ENCODE measurements at regions of chr12 and their contacts with region 1.

Region 1: DNA sequence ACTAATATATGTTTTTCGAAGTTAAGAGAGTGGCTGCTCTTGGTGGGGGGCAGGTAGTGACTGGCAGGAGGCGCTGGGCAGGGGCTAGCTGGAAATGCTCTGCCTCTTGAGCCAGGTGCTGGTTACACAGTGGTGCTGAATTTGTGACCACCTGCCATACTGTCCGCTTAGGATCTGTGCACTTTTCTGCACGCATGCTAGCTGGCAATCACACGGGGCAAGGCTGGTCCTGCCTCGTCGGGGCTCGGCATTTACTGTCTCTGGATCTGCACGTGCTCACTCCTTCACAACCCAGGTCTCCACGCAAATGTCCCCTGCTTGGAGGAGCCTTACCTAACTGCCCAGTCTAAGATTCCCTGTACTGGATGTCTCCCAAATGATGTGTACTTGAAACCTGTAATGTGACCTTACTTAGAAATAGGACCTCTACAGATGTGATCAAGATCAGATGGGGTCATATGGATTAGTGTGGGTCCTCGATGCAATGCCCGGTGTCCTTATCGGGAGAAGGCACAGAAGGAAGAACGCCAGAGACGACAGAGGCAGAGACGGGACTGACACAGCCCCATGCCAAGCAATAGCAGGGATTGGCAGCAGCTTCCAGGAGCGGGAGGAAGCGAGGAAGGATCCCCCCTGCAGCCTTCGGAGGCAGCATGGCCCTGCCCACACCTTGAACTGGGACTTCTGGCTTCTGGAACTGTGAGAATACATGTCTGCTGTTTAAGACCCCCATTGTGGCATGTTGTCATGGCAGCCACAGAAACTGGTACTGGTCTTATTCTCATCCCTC is 59.5 kb downstream of the RBM19 start:
- DNase-seq: no peak

Region 2: GRCh38 chr12:113462117-113462774 is 444.4 kb before region 1 on chr12:
- intact Hi-C with region 1: loop called (anchors 2 to 5 kb)
- DNase-seq: peak; percentile 94

Region 3: DNA sequence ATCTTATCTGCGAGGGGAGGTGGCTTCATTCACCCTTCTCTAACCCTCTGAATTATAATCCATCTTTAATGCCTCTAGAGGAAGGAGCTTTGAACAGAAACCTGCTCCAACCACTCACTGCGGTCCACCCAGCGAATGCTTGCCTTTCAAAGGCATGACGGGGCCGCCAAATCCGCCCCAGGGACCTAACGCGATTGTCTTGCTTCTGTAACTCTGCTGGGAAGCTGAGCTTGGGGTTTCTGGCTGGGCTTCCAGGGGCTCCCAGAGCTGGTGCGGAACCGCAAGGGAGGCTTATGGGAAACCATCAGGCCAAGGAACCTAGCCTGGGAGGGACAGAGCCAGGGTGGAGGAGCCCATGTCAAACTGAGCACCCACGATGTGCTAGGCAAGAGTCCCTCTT is 203.8 kb before region 1 on chr12:
- intact Hi-C with region 1: no loop called
- DNase-seq: no peak